ENCODE measurements at regions of chr17 and their contacts with region 1.

Region 1: GRCh38 chr17:61002316-61002736 is 324.7 kb downstream of the BCAS3 start:
- DNase-seq: no peak
- H3K4me3 ChIP-seq: no peak overlapping the region
- H3K27ac ChIP-seq: no peak overlapping the region
- H3K4me1 ChIP-seq: no peaks in the 10 kb centered on the region
- H3K27me3 ChIP-seq: no peaks in the 10 kb centered on the region
- CTCF ChIP-seq: peak in 2 of 3 donors; percentile 16 to 26
- EP300 ChIP-seq: no peak
- POLR2A ChIP-seq: no peak

Region 2: GRCh38 chr17:61389670-61390478 is 387.5 kb after region 1 on chr17:
- intact Hi-C with region 1: loop called in 3 of 4 experiments (anchors 5 to 10 kb)
- DNase-seq: peak in 2 of 5 donors; percentile 55 to 70
- H3K4me3 ChIP-seq: no peak overlapping the region
- H3K27ac ChIP-seq: no peak overlapping the region
- H3K4me1 ChIP-seq: no peaks in the 10 kb centered on the region
- H3K27me3 ChIP-seq: no peaks in the 10 kb centered on the region
- CTCF ChIP-seq: peak; percentile 47 to 55 (median 48)
- EP300 ChIP-seq: no peak
- POLR2A ChIP-seq: no peak

Measured in ovary (tissue), 10 donors.